ENCODE measurements at regions of chr7 and their contacts with region 1.

Region 1: DNA sequence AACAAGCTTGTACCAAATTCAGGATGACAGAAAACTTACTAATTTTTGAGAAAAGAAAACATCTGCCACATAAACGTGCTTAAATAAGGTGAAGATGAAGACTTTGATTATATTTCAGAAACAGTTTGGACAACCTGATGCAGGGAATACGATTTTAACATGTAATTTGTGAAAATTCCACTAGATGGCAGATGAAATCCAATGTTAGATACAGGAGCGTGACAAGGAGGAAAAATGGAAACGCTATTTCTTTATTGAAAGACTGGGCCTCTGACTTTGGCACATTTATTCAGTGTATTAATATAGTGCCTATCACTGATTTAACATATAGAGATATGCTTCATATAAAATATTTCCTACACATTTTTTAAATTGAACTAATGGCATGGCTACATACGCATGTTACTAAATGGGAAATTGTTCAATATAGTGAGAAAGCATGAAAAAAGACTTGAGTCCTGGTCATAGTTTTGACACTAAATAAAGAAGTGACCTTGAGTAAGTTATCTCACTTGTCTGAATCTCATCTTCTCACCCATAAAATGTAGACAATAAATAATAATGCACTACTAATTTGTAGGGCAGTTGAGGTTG is 60.7 kb downstream of the CD36 start:
- DNase-seq: peak; percentile 17 to 66
- ATAC-seq: peak; percentile 57 to 82; a peak in 5 of 6 replicates
- H3K4me3 ChIP-seq: no peak overlapping the region
- H3K27ac ChIP-seq: peak overlapping the region; percentile 84 to 90
- H3K4me1 ChIP-seq: peaks cover 37% of the 10 kb centered on the region
- CTCF ChIP-seq: peak; percentile 89
- EP300 ChIP-seq: no peak
- POLR2A ChIP-seq: no peak
- RAD21 ChIP-seq: peak; percentile 95 to 97

Region 2: DNA sequence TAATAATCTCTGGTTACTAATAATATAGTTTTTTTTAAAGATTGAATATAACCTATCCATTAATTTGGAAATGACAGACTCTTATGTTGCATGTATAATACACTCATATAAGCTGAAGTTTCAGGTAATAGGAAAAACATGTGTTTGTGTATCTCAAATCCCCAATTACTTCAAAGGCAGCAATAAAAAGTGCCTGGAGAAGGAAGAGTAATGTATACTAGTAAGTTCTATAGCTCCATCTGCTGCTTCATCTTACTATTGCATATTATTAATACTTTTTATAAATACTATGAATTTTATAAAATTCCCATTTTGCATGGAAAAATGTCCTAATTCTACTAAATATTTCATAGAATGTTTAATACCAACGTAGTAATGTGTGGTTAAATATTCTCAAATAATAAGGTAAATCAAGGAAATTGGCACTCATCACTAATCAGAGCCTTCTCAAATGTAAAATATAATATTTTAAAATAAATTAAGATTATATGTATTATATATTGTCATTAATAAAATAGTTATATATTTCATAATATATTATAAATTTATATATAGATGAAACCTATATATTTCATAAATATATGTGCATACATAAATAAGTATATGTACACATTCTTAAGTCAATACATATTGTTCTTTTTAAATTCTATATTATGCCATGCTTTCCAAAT is 758.8 kb after region 1 on chr7:
- CTCF ChIA-PET with region 1: interaction called, 10 read pairs
- POLR2A ChIA-PET with region 1: no interaction called
- DNase-seq: peak; percentile 28 to 50
- ATAC-seq: no peak
- H3K4me3 ChIP-seq: no peak overlapping the region
- H3K27ac ChIP-seq: peak overlapping the region; percentile 17 to 76; a peak in 4 of 6 replicates
- H3K4me1 ChIP-seq: peaks cover 25% of the 10 kb centered on the region
- CTCF ChIP-seq: peak; percentile 69
- EP300 ChIP-seq: no peak
- POLR2A ChIP-seq: no peak
- RAD21 ChIP-seq: peak; percentile 82 to 90